Psoas muscle (tissue), 8 donors: ENCODE measurements at regions of chr11 and their contacts with region 1.

Region 1: GRCh38 chr11:10653926-10654810 is 39.4 kb downstream of the IRAG1 start:
- DNase-seq: no peak
- ATAC-seq: peak; percentile 77 to 90 (median 87)
- H3K4me3 ChIP-seq: no peak overlapping the region
- H3K27ac ChIP-seq: no peak overlapping the region
- H3K4me1 ChIP-seq: peaks cover 24% of the 10 kb centered on the region
- H3K27me3 ChIP-seq: no peaks in the 10 kb centered on the region
- CTCF ChIP-seq: peak; percentile 71

Region 2: GRCh38 chr11:10405855-10406592 is 248.1 kb before region 1 on chr11:
- intact Hi-C with region 1: loop called in 1 of 2 experiments (anchors 5 kb)
- DNase-seq: peak; percentile 53 to 70
- ATAC-seq: peak; percentile 79 to 84 (median 82)
- H3K4me3 ChIP-seq: no peak overlapping the region
- H3K27ac ChIP-seq: peak overlapping the region; percentile 69
- H3K4me1 ChIP-seq: peaks cover 30% of the 10 kb centered on the region
- H3K27me3 ChIP-seq: no peaks in the 10 kb centered on the region
- CTCF ChIP-seq: peak; percentile 78

Region 3: DNA sequence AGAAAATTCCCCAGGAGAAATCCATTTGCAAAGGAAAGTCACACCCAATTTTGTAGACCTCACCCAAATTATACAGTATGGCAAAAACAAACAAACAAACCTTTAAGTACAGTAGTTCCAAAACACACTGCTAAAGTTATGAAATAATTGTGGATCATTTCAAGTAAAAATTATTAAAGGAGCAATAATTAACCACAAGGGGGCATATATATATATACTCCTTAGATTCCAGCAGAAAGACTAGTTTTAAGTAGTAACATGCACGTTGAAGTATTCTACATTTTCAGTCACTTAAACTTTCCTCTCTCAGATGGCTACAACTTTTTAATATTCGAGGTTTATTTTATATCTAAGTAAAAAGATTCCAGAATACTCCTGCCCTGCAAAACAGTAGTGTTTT is 140.0 kb before region 1 on chr11:
- intact Hi-C with region 1: loop called in 1 of 2 experiments (anchors 5 kb)
- DNase-seq: no peak
- ATAC-seq: no peak
- H3K4me3 ChIP-seq: no peak overlapping the region
- H3K27ac ChIP-seq: no peak overlapping the region
- H3K4me1 ChIP-seq: peaks cover 9% of the 10 kb centered on the region
- H3K27me3 ChIP-seq: no peaks in the 10 kb centered on the region
- CTCF ChIP-seq: peak; percentile 31

Region 4: GRCh38 chr11:10540923-10541560 is 113.1 kb before region 1 on chr11 and contains the start of gene RNF141:
- intact Hi-C with region 1: loop called (anchors 2 to 5 kb)
- DNase-seq: peak; percentile 97 to 98
- ATAC-seq: peak; percentile 99 to 100 (median 99)
- H3K4me3 ChIP-seq: peak within 1 kb of the TSS; percentile 82
- H3K27ac ChIP-seq: peak within 1 kb of the TSS; percentile 90
- H3K4me1 ChIP-seq: peaks cover 19% of the 10 kb centered on the region
- H3K27me3 ChIP-seq: no peaks in the 10 kb centered on the region
- CTCF ChIP-seq: peak; percentile 78
- total RNA-seq, gene RNF141: 16.6 to 42.2 (median 36.1) TPM

Region 5: DNA sequence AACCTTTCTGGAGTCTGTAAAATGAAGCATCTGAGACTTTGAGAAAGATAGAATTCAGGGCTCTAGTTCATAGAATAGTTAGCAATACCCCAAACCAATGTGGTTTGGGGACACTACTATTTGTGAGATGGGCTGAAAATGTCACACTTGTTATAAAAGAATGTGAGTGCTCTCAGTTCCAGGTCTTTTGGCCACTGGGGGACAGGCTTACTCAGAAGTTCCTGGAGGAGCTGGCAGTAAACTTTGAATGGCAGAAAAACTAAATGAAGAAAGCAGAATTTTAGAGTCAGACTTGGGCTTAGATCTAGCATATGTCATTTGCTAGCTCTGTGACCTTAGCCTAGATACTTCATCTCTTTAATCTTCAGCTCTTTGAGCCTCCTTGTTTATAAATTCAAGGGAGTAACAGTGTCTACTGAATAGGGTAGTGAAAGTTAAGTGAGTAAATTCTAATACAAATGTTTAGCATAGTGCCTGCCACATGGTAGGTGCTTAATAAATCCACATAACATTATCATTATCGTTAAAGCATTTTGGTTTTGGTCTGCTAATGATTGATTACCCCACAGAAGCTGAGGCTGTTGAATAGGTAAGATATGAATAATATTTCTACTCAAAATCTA is 89.4 kb before region 1 on chr11:
- intact Hi-C with region 1: loop called (anchors 5 kb)
- DNase-seq: no peak
- ATAC-seq: peak in 1 of 4 donors; percentile 45
- H3K4me3 ChIP-seq: peak overlapping the region; percentile 26
- H3K27ac ChIP-seq: no peak overlapping the region
- H3K4me1 ChIP-seq: peaks cover 6% of the 10 kb centered on the region
- H3K27me3 ChIP-seq: no peaks in the 10 kb centered on the region
- CTCF ChIP-seq: peak; percentile 48

Region 6: GRCh38 chr11:10725114-10725906 is 71.1 kb after region 1 on chr11:
- intact Hi-C with region 1: loop called in 1 of 2 experiments (anchors 5 kb)
- DNase-seq: no peak
- ATAC-seq: no peak
- H3K4me3 ChIP-seq: no peak overlapping the region
- H3K27ac ChIP-seq: no peak overlapping the region
- H3K4me1 ChIP-seq: no peaks in the 10 kb centered on the region
- H3K27me3 ChIP-seq: no peaks in the 10 kb centered on the region
- CTCF ChIP-seq: no peak